Prostate gland (tissue), 2 donors: ENCODE measurements at regions of chrX and their contacts with region 1.

Region 1: DNA sequence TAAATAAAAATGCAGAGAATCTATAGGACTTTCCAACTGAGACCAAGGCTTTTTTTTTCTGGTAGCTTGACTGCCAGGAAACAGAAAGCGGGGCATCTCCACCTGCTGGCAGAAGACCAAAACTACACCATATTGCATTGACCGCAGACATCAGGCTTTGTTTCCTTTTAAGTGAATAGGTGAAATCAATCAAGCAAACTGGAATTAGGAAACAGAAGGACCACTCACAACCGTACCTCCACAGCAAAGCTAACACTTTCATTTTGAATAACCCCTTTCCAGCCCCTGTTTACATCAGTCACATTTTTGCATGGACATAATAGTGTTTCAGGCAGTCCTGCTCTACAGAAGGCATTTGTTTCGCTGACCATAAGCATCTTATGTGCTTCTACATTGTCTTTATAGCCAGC is 218.2 kb downstream of the IDS start:
- DNase-seq: peak; percentile 10
- H3K4me3 ChIP-seq: no peak overlapping the region
- H3K27ac ChIP-seq: no peak overlapping the region
- H3K4me1 ChIP-seq: no peaks in the 10 kb centered on the region
- H3K27me3 ChIP-seq: no peaks in the 10 kb centered on the region
- CTCF ChIP-seq: peak; percentile 15 to 53 (median 38)
- POLR2A ChIP-seq: no peak

Region 2: DNA sequence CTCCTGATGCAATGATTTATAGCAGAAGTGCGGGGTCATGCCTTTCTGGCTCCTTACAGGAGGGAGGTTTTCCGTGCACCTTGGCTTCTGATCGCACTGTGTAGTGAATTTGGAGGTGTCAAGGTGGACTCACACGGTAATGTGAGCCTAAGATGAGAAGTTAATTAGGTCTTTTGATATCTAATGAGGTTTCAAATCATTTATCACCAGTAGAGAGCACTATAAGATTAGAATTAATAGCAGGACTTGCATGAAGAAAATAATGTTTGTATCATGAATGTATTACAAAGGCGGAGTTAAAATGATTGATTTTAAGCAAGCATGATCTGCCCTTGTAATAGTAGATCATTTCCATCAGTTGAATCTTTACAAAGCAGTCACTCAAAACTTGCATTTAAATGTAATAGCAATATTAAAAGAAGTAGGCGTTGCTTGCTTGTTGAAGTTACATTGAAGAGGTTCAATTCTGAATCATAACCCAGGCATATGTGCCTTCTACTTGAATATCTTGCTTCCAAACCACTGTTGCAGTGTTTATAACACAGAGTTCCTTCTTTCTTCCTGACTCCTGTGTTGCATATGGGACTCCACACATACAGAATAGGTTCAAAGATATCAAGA is 1153.7 kb before region 1 on chrX:
- intact Hi-C with region 1: loop called (anchors 5 kb)
- DNase-seq: no peak
- H3K4me3 ChIP-seq: no peak overlapping the region
- H3K27ac ChIP-seq: no peak overlapping the region
- H3K4me1 ChIP-seq: no peaks in the 10 kb centered on the region
- H3K27me3 ChIP-seq: no peaks in the 10 kb centered on the region
- CTCF ChIP-seq: peak in 1 of 4 experiments; percentile 5
- POLR2A ChIP-seq: no peak